Mammary epithelial cell (primary cell): ENCODE measurements at regions of chr10 and their contacts with region 1.

Region 1: DNA sequence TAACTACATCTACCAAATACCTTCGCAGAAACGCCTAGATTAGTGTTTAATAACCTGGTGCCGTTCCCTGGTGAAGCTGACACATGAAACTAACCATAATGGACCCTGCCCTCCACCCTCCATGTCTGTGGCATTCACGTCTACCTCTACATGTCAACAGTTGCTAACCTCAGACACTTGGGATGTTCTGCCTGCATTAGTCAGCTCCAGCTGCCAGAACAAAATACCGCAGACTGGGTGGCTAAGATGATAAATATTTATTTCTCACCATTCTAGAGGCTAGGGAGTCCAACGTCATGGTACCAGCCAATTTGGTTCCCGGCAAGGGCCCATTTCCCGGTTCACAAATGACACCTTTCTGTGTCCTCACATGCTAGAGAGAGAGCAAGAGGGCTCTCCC is 118.5 kb upstream of the CHST15 start:
- DNase-seq: peak; percentile 92
- H3K4me3 ChIP-seq: no peak overlapping the region
- H3K27ac ChIP-seq: no peak overlapping the region
- H3K4me1 ChIP-seq: peaks cover 6% of the 10 kb centered on the region
- H3K27me3 ChIP-seq: no peaks in the 10 kb centered on the region
- CTCF ChIP-seq: no peak

Region 2: DNA sequence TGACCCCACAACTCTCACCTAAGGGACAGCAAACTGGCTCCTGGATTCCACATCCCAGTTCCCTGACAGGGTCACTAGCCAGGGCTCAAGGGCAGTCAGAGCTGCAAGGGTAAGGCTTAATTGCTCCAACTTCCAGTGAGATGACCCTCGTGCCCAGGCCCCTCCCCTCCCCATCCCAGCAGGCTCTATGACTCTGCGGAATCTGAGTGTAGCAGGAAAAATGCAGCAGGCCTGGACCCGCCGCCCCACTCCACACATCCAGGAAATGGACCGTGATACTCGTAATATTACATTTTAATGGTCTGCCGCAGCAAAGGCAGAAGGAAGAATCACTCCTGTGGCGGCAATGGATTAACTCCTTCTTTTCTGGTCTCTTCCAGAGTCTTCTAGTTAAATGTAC is 26.8 kb before region 1 on chr10:
- CTCF ChIA-PET with region 1: no interaction called
- dilution Hi-C with region 1: no loop called
- in situ Hi-C with region 1: no loop called
- intact Hi-C with region 1: loop called (anchors 2 kb)
- DNase-seq: peak; percentile 77
- H3K4me3 ChIP-seq: no peak overlapping the region
- H3K27ac ChIP-seq: peak overlapping the region; percentile 64
- H3K4me1 ChIP-seq: peaks cover 26% of the 10 kb centered on the region
- H3K27me3 ChIP-seq: no peaks in the 10 kb centered on the region
- CTCF ChIP-seq: no peak